Right cardiac atrium (tissue), 5 donors: ENCODE measurements at regions of chr3 and their contacts with region 1.

Region 1: DNA sequence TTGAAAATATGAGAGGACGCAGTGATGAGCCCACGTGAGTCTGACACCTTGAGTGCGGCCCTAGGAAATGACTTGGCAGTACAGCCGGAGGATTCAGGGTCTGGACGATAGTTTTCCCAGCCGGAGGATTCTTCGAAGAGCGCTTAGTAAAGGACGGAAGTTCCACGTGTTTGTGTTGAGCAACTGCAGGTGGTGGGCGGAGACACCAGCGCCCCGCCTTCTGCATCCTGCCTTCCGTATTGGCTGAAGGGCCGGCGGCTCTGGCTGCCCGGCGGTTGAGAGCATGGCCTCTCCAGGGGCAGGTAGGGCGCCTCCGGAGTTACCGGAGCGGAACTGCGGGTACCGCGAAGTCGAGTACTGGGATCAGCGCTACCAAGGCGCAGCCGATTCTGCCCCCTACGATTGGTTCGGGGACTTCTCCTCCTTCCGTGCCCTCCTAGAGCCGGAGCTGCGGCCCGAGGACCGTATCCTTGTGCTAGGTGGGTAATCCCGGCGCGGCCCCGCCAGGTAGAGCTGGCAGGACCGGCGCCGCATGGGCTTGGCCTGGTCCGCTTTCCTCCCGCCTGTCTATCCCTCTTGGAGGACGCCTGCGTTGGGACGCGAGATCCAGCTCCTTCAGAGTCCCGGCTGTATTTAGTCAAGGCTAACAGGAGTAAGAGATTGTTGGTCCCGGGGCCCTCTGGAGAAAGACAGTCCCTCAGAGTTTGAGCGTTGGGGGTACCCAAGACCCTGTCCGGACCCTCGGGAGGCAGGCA is at the start of gene EEF1AKMT4:
- DNase-seq: peak; percentile 97 to 98 (median 98)
- ATAC-seq: peak; percentile 99
- H3K4me3 ChIP-seq: peak within 1 kb of the TSS; percentile 49
- H3K27ac ChIP-seq: peak within 1 kb of the TSS; percentile 47
- H3K4me1 ChIP-seq: no peaks in the 10 kb centered on the region
- H3K27me3 ChIP-seq: no peaks in the 10 kb centered on the region
- total RNA-seq, gene EEF1AKMT4: 1.1 to 1.8 (median 1.3) TPM

Region 2: GRCh38 chr3:183895296-183895695 is 354.3 kb before region 1 on chr3:
- intact Hi-C with region 1: loop called in 1 of 4 experiments (anchors 10 kb)
- DNase-seq: no peak
- ATAC-seq: peak; percentile 66 to 69
- H3K4me3 ChIP-seq: no peak overlapping the region
- H3K27ac ChIP-seq: no peak overlapping the region
- H3K4me1 ChIP-seq: no peaks in the 10 kb centered on the region
- H3K27me3 ChIP-seq: no peaks in the 10 kb centered on the region

Region 3: GRCh38 chr3:184145111-184145524 is 104.5 kb before region 1 on chr3:
- intact Hi-C with region 1: loop called in 1 of 4 experiments (anchors 10 kb)
- DNase-seq: peak; percentile 55 to 87 (median 76)
- ATAC-seq: peak; percentile 58 to 60
- H3K4me3 ChIP-seq: no peak overlapping the region
- H3K27ac ChIP-seq: no peak overlapping the region
- H3K4me1 ChIP-seq: no peaks in the 10 kb centered on the region
- H3K27me3 ChIP-seq: no peaks in the 10 kb centered on the region